CD4-positive, alpha-beta T cell (primary cell): ENCODE measurements at regions of chr21 and their contacts with region 1.

Region 1: DNA sequence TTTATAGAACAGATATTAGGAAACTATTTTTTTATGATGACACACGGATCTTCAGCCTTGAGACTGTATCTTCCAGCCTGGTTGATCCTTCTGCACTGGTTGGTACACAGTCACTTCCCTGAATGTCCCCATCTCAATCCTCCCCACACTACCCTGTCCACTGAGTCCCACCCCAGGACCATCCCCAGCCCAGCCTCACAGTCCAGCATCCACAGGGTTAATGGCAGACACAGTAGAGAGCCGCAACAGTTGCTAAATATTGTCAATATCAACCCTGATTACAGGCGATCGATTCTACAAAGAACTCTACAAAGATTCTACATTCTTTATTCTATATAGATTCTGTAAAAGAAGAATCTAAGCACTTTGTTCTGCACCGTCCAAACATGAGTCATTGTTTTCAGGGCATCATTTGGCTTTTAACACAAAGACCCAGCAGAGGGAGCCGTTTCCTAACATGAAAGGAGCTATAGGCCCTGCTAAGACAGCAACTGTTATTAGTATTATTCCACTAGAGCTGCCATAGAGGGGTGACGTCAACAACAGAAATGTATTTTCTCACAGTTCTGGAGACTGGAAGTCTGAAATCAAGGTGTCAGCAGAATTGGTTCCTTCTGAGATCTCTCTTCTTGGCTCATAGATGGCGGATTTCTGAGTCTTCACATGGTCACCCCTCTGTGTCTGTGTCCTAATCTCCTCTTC is 30.1 kb upstream of the IFNAR2 start:
- DNase-seq: peak; percentile 63 to 93 (median 75)
- ATAC-seq: peak; percentile 93
- H3K4me3 ChIP-seq: no peak overlapping the region
- H3K4me3 Mint-ChIP-seq: no peak overlapping the region
- H3K27ac ChIP-seq: no peak overlapping the region
- H3K27ac Mint-ChIP-seq: peak overlapping the region; percentile 79
- H3K4me1 ChIP-seq: peaks cover 21% of the 10 kb centered on the region
- H3K4me1 Mint-ChIP-seq: peaks cover 55% of the 10 kb centered on the region
- H3K27me3 ChIP-seq: no peaks in the 10 kb centered on the region
- H3K27me3 Mint-ChIP-seq: no peaks in the 10 kb centered on the region
- CTCF ChIP-seq: peak; percentile 75

Region 2: GRCh38 chr21:32094804-32095203 is 1104.9 kb before region 1 on chr21:
- CTCF ChIA-PET with region 1: no interaction called
- POLR2A ChIA-PET with region 1: no interaction called
- intact Hi-C with region 1: no loop called
- DNase-seq: no peak
- ATAC-seq: no peak
- H3K4me3 ChIP-seq: no peak overlapping the region
- H3K4me3 Mint-ChIP-seq: no peak overlapping the region
- H3K27ac ChIP-seq: no peak overlapping the region
- H3K27ac Mint-ChIP-seq: no peak overlapping the region
- H3K4me1 ChIP-seq: no peaks in the 10 kb centered on the region
- H3K4me1 Mint-ChIP-seq: no peaks in the 10 kb centered on the region
- H3K27me3 ChIP-seq: peaks cover 0 to 4% of the 10 kb centered on the region in 2 experiments
- H3K27me3 Mint-ChIP-seq: peaks cover 26% of the 10 kb centered on the region
- CTCF ChIP-seq: no peak

Region 3: DNA sequence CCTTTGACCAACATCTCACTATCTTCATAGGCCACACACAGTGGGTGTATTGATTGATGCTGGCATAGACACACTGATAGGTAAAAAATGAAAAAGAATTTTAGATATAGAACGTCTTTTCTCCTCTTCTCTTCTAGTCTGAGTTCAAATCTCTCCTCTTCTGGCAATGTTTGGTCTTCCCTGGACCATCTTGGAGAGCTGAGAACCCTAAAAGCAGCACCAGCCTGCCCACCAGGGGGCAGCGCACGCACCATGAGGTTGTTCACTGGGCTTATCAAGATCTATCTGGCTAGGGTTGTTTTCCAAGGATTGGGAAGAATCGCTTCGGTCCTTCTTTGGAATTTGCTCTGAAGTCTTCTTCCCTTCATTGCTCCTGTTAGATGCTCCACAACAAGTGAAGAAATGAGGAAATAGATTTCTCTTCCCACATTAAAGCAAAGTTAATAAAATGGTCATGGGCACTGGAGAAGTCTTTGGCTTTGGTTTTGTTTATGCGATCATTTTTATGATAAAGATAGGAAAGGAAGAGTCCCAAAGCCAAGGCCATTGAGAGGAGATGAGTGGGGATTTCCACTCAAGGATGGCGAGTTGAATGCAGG is 277.9 kb before region 1 on chr21:
- CTCF ChIA-PET with region 1: no interaction called
- POLR2A ChIA-PET with region 1: no interaction called
- intact Hi-C with region 1: loop called in 1 of 2 experiments (anchors 5 kb)
- DNase-seq: peak in 13 of 14 experiments; percentile 9 to 64 (median 36)
- ATAC-seq: no peak
- H3K4me3 ChIP-seq: no peak overlapping the region
- H3K4me3 Mint-ChIP-seq: no peak overlapping the region
- H3K27ac ChIP-seq: no peak overlapping the region
- H3K27ac Mint-ChIP-seq: no peak overlapping the region
- H3K4me1 ChIP-seq: peaks cover 2% of the 10 kb centered on the region
- H3K4me1 Mint-ChIP-seq: peaks cover 19% of the 10 kb centered on the region
- H3K27me3 ChIP-seq: no peaks in the 10 kb centered on the region
- H3K27me3 Mint-ChIP-seq: no peaks in the 10 kb centered on the region
- CTCF ChIP-seq: peak; percentile 67

Region 4: GRCh38 chr21:33127154-33127893 is 72.3 kb before region 1 on chr21:
- CTCF ChIA-PET with region 1: interaction called, 3 read pairs
- POLR2A ChIA-PET with region 1: no interaction called
- intact Hi-C with region 1: loop called (anchors 1 to 2 kb)
- DNase-seq: peak; percentile 28 to 75 (median 50)
- ATAC-seq: peak; percentile 60
- H3K4me3 ChIP-seq: peak overlapping the region; percentile 40
- H3K4me3 Mint-ChIP-seq: peak overlapping the region; percentile 77
- H3K27ac ChIP-seq: no peak overlapping the region
- H3K27ac Mint-ChIP-seq: no peak overlapping the region
- H3K4me1 ChIP-seq: peaks cover 7% of the 10 kb centered on the region
- H3K4me1 Mint-ChIP-seq: peaks cover 14% of the 10 kb centered on the region
- H3K27me3 ChIP-seq: peaks cover 0 to 3% of the 10 kb centered on the region in 2 experiments
- H3K27me3 Mint-ChIP-seq: peaks cover 30% of the 10 kb centered on the region
- CTCF ChIP-seq: peak; percentile 73

Region 5: GRCh38 chr21:33238565-33239255 is 39.0 kb after region 1 on chr21:
- CTCF ChIA-PET with region 1: interaction called, 11 read pairs
- POLR2A ChIA-PET with region 1: interaction called, 7 read pairs
- intact Hi-C with region 1: loop called in 1 of 2 experiments (anchors 10 kb)
- DNase-seq: peak in 3 of 14 experiments; percentile 50 to 69 (median 65)
- ATAC-seq: peak; percentile 68
- H3K4me3 ChIP-seq: peak overlapping the region; percentile 10
- H3K4me3 Mint-ChIP-seq: peak overlapping the region; percentile 65
- H3K27ac ChIP-seq: peak overlapping the region; percentile 57 to 66
- H3K27ac Mint-ChIP-seq: peak overlapping the region; percentile 89
- H3K4me1 ChIP-seq: peaks cover 70% of the 10 kb centered on the region
- H3K4me1 Mint-ChIP-seq: peaks cover 86% of the 10 kb centered on the region
- H3K27me3 ChIP-seq: no peaks in the 10 kb centered on the region
- H3K27me3 Mint-ChIP-seq: no peaks in the 10 kb centered on the region
- CTCF ChIP-seq: no peak

Region 6: DNA sequence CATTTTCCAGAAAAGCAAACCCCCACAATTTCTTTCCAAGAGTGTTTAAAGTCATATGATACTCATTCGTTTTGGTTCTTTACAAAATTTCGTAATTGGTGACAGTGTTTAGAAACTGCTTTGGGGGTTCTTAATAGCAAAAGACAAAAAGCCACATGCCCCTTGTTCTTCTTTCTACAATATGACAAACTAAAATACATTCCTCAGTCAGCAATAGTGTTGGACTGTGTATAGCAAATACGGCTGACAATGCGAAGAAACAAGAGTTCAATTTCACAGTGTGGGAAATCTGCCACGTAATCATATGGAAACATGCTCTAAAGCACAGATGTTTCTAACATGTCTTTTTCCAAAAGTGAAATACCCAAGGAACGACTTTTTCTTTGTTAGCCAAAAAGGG is 117.5 kb after region 1 on chr21:
- CTCF ChIA-PET with region 1: interaction called, 9 read pairs
- POLR2A ChIA-PET with region 1: no interaction called
- intact Hi-C with region 1: loop called in 1 of 2 experiments (anchors 5 kb)
- DNase-seq: no peak
- ATAC-seq: no peak
- H3K4me3 ChIP-seq: no peak overlapping the region
- H3K4me3 Mint-ChIP-seq: no peak overlapping the region
- H3K27ac ChIP-seq: no peak overlapping the region
- H3K27ac Mint-ChIP-seq: no peak overlapping the region
- H3K4me1 ChIP-seq: no peaks in the 10 kb centered on the region
- H3K4me1 Mint-ChIP-seq: no peaks in the 10 kb centered on the region
- H3K27me3 ChIP-seq: no peaks in the 10 kb centered on the region
- H3K27me3 Mint-ChIP-seq: no peaks in the 10 kb centered on the region
- CTCF ChIP-seq: no peak

Region 7: DNA sequence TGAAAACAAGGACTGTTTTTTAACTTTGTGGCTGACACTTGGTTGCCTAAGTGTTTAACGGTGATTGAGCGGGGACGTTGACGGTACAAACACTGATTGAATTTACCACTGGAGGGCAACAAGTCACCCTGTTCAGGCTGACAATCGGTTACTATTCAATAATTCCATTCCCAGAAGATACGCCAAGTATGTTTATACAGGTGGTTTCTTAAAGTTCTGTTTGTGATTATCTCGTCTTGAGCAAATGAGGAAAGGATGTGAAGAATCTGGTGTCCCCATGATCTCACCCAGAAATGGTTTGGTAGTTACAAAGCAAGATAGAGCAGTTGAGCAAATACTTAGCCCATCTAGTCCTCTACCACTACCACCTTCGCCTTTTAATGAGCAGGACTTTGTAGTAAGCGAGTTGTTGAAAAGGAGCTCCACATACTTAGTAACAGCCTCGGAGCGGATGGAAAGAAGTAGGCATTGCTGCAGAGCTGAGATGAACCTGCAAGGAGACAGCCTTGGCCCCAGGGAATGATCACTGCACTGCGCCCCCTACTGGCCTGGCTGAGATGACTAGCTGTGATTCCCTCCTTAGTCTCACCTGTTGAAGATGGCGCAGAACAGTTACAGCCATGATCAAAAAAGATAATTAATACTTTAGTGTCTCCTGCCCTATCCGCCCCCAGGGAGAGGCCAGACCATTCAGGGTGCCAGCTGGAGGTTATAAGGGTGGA is 161.4 kb after region 1 on chr21:
- CTCF ChIA-PET with region 1: interaction called, 22 read pairs
- POLR2A ChIA-PET with region 1: interaction called, 30 read pairs
- intact Hi-C with region 1: loop called (anchors 1 to 5 kb)
- DNase-seq: peak; percentile 80 to 93 (median 88)
- ATAC-seq: peak; percentile 68
- H3K4me3 ChIP-seq: peak overlapping the region; percentile 44
- H3K4me3 Mint-ChIP-seq: peak overlapping the region; percentile 90
- H3K27ac ChIP-seq: peak overlapping the region; percentile 66 to 79
- H3K27ac Mint-ChIP-seq: peak overlapping the region; percentile 88
- H3K4me1 ChIP-seq: peaks cover 17% of the 10 kb centered on the region
- H3K4me1 Mint-ChIP-seq: peaks cover 26% of the 10 kb centered on the region
- H3K27me3 ChIP-seq: no peaks in the 10 kb centered on the region
- H3K27me3 Mint-ChIP-seq: no peaks in the 10 kb centered on the region
- CTCF ChIP-seq: peak; percentile 88

Region 8: DNA sequence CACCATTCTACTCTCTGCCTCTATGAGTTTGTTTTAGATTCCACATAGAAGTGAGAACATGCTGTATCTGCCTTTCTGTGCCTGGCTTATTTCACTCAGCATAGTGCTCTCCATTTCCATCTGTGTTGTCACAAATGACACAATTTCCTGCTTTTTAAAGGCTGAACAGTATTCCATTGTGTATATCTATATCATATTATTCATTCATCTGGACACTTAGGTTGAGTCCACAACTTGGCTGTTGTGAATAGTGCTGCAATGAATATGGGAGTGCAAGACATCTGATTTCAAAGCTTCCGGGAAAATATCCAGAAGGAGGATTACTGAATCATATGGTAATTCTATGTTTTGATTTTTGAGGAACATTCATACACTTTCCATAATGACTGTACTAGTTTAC is 408.9 kb after region 1 on chr21:
- CTCF ChIA-PET with region 1: interaction called, 3 read pairs
- POLR2A ChIA-PET with region 1: no interaction called
- intact Hi-C with region 1: loop called (anchors 5 kb)
- DNase-seq: no peak
- ATAC-seq: no peak
- H3K4me3 ChIP-seq: no peak overlapping the region
- H3K4me3 Mint-ChIP-seq: no peak overlapping the region
- H3K27ac ChIP-seq: no peak overlapping the region
- H3K27ac Mint-ChIP-seq: no peak overlapping the region
- H3K4me1 ChIP-seq: no peaks in the 10 kb centered on the region
- H3K4me1 Mint-ChIP-seq: peaks cover 5% of the 10 kb centered on the region
- H3K27me3 ChIP-seq: no peaks in the 10 kb centered on the region
- H3K27me3 Mint-ChIP-seq: no peaks in the 10 kb centered on the region
- CTCF ChIP-seq: no peak

Region 9: DNA sequence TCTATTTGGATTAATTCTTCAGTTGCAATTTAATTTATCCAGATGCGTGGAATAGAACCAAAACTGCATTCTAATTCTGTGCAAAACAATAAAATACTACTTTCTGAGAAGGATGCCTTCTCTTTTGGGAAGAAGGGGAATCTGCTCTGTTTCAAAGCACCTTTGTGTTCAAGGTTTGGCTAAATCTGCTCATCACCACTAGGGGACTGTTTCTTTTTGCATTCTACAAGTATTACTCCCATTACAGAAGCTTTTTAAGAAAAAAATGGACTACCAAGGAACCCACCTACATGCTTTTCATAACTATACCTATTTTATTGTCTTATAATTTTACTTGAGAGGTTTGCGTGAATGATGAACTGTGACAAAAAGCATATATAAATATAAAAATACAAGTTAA is 891.9 kb after region 1 on chr21:
- CTCF ChIA-PET with region 1: no interaction called
- POLR2A ChIA-PET with region 1: no interaction called
- intact Hi-C with region 1: no loop called
- DNase-seq: peak in 1 of 14 experiments; percentile 22
- ATAC-seq: no peak
- H3K4me3 ChIP-seq: no peak overlapping the region
- H3K4me3 Mint-ChIP-seq: peak overlapping the region; percentile 2
- H3K27ac ChIP-seq: no peak overlapping the region
- H3K27ac Mint-ChIP-seq: peak overlapping the region; percentile 33
- H3K4me1 ChIP-seq: peaks cover 14% of the 10 kb centered on the region
- H3K4me1 Mint-ChIP-seq: peaks cover 66% of the 10 kb centered on the region
- H3K27me3 ChIP-seq: no peaks in the 10 kb centered on the region
- H3K27me3 Mint-ChIP-seq: no peaks in the 10 kb centered on the region
- CTCF ChIP-seq: peak; percentile 34